Vagina (tissue), 2 donors: ENCODE measurements at regions of chr7 and their contacts with region 1.

Region 1: DNA sequence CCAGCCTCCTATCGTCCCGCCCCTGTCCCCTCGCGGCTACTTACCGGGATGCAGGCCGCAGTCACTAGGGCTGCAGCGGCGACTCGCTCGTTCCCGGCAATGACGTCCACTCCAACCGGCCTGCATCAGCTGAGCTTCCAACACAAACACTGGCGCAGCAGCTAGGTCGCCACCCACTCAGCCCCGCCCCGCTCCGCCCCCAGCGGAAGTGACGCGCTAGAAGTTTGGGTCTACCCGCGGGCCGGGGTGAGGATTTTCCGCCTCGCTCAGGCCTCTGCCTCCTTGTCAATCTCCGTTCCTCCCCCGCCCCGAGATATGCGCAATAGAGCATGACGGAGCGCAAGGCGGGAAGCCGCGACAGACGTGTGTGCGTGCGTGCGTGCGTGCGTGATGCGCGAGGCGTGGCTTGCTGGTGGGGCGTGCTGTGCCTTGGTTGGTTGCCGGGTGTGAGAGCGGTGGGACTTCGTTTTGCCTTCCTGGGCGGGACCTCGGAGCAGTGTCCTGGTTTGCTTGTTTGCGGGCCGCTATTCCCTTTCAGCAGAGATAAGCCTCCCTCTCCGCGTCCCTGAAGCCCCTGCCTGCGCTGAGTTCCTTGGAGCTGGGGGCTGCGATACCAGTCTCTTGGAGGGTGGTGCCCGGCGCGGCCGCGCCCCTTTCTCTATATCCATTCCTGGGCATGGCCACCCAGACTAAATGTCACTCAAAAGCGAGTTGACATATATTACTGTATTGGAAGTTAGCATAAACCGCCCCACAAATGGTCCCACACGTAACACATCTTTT is at the start of gene PNPLA8:
- DNase-seq: peak; percentile 100
- H3K4me3 ChIP-seq: peak within 1 kb of the TSS; percentile 72 to 75
- H3K27ac ChIP-seq: peak within 1 kb of the TSS; percentile 97
- H3K4me1 ChIP-seq: peaks cover 48% of the 10 kb centered on the region
- H3K27me3 ChIP-seq: no peaks in the 10 kb centered on the region
- CTCF ChIP-seq: no peak
- POLR2A ChIP-seq: peak; percentile 51 to 94
- total RNA-seq, gene PNPLA8: 18.7 TPM

Region 2: GRCh38 chr7:108347616-108348015 is 178.6 kb before region 1 on chr7:
- intact Hi-C with region 1: no loop called
- DNase-seq: no peak
- H3K4me3 ChIP-seq: no peak overlapping the region
- H3K27ac ChIP-seq: no peak overlapping the region
- H3K4me1 ChIP-seq: no peaks in the 10 kb centered on the region
- H3K27me3 ChIP-seq: no peaks in the 10 kb centered on the region
- CTCF ChIP-seq: no peak
- POLR2A ChIP-seq: no peak

Region 3: DNA sequence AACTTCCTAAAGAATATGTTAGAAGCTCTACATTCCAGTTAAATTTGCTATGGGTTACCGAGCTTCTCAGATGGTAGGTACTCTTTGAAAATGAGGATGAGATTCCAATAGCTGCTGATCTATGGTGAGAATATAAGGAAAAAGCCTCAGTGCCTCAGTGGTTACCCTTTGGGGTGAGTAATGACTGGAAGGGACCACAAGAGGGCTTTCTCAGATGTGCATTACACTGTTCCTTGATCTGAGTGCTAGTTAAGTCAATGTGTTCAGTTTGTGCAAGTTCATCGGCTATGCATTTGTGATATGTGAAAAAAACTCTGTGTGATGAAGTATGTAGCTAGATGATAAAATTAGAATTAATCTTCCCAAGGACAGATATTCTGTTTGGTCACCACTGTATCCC is 73.5 kb before region 1 on chr7:
- intact Hi-C with region 1: no loop called
- DNase-seq: no peak
- H3K4me3 ChIP-seq: no peak overlapping the region
- H3K27ac ChIP-seq: no peak overlapping the region
- H3K4me1 ChIP-seq: peaks cover 18% of the 10 kb centered on the region
- H3K27me3 ChIP-seq: no peaks in the 10 kb centered on the region
- CTCF ChIP-seq: no peak
- POLR2A ChIP-seq: no peak

Region 4: GRCh38 chr7:108569381-108570145 is 43.4 kb after region 1 on chr7 and contains the starts of genes DNAJB9 and THAP5:
- intact Hi-C with region 1: loop called (anchors 2 kb)
- DNase-seq: peak; percentile 100
- H3K4me3 ChIP-seq: peak within 1 kb of the TSS; percentile 85 to 94
- H3K27ac ChIP-seq: peak within 1 kb of the TSS; percentile 97
- H3K4me1 ChIP-seq: peaks cover 34% of the 10 kb centered on the region
- H3K27me3 ChIP-seq: no peaks in the 10 kb centered on the region
- CTCF ChIP-seq: no peak
- POLR2A ChIP-seq: peak; percentile 24 to 78
- total RNA-seq, gene DNAJB9: 28.7 TPM
- total RNA-seq, gene THAP5: 14.5 TPM